GM10248 (cell line): ENCODE measurements at regions of chr14 and their contacts with region 1.

Region 1: GRCh38 chr14:76647697-76648298 is 113.5 kb upstream of the VASH1 start:
- DNase-seq: peak; percentile 69
- CTCF ChIP-seq: peak; percentile 80

Region 2: GRCh38 chr14:76551906-76552305 is 95.9 kb before region 1 on chr14:
- CTCF ChIA-PET with region 1: no interaction called
- POLR2A ChIA-PET with region 1: no interaction called
- DNase-seq: no peak
- CTCF ChIP-seq: no peak

Region 3: DNA sequence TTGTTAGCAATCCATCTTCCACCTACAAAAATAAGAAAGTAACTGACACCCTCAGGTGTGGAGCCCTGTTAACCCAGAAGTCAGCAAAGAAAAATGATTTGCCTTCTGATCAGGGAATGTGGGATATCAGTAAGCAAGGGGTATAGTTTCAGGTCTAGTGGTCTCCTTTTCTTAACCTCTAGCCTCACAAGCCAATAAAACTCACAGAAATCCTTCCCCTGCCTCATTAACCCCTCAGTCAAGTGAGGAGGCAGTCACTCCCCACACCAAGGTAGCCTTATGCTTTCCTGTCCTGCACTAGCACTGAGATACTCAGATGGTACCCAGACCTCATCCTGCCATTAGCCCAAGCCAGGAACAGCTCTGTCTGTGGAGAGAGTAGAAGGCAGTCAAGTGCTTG is 10.0 kb after region 1 on chr14:
- CTCF ChIA-PET with region 1: interaction called, 16 read pairs
- POLR2A ChIA-PET with region 1: no interaction called
- DNase-seq: no peak
- CTCF ChIP-seq: no peak